MCF 10A (cell line): ENCODE measurements at regions of chr1 and their contacts with region 1.

Region 1: GRCh38 chr1:179293340-179294327 is at the start of gene SOAT1:
- DNase-seq: peak; percentile 90
- H3K4me3 Mint-ChIP-seq: peak within 1 kb of the TSS; percentile 78
- H3K27ac Mint-ChIP-seq: peak within 1 kb of the TSS; percentile 68
- H3K4me1 Mint-ChIP-seq: peaks cover 29% of the 10 kb centered on the region
- H3K27me3 Mint-ChIP-seq: no peaks in the 10 kb centered on the region
- CTCF ChIP-seq: peak; percentile 16
- total RNA-seq, gene SOAT1: 28.4 and 39.7 TPM in 2 replicates

Region 2: DNA sequence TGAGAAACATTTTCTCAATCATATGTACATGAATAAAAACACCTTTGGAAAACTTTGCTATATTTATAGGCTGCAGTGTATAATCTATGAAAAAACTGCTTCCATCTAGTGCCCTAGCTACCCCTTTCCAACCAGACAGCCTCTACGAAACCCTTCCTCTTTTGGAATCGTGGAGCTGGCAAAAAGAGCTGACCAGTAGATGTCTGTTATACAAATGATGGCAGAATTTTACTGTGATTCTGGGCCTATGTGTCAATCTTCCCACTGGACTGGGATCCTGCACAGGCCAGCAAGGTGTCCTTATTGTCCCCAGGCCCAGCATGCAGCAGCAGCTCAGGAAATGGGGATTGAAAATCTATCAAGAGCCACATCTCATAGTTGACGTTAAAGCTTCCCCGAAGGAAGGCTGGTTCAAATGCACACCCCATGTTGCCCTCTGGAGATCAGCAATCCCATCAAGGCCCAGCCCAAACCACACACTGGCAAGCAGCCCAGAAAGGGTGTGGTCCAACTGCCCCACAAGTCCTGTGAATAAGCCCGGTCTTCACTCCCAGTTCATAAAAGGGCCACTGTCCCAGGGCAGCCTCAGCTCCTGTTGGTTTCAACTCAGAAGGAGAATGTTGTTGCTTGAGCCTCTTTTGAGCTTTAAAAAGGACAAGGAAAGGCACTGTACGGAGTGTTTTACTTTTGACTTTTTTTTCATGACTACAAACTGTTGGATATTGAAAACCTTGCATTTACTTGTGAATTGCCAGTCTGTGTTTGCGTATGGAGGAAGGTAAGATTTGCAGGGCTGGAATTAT is 276.7 kb before region 1 on chr1:
- CTCF ChIA-PET with region 1: no interaction called
- POLR2A ChIA-PET with region 1: interaction called, 8 read pairs
- intact Hi-C with region 1: loop called (anchors 5 kb)
- DNase-seq: peak; percentile 99
- H3K4me3 Mint-ChIP-seq: peak overlapping the region; percentile 26
- H3K27ac Mint-ChIP-seq: peak overlapping the region; percentile 54
- H3K4me1 Mint-ChIP-seq: peaks cover 29% of the 10 kb centered on the region
- H3K27me3 Mint-ChIP-seq: no peaks in the 10 kb centered on the region
- CTCF ChIP-seq: no peak

Region 3: DNA sequence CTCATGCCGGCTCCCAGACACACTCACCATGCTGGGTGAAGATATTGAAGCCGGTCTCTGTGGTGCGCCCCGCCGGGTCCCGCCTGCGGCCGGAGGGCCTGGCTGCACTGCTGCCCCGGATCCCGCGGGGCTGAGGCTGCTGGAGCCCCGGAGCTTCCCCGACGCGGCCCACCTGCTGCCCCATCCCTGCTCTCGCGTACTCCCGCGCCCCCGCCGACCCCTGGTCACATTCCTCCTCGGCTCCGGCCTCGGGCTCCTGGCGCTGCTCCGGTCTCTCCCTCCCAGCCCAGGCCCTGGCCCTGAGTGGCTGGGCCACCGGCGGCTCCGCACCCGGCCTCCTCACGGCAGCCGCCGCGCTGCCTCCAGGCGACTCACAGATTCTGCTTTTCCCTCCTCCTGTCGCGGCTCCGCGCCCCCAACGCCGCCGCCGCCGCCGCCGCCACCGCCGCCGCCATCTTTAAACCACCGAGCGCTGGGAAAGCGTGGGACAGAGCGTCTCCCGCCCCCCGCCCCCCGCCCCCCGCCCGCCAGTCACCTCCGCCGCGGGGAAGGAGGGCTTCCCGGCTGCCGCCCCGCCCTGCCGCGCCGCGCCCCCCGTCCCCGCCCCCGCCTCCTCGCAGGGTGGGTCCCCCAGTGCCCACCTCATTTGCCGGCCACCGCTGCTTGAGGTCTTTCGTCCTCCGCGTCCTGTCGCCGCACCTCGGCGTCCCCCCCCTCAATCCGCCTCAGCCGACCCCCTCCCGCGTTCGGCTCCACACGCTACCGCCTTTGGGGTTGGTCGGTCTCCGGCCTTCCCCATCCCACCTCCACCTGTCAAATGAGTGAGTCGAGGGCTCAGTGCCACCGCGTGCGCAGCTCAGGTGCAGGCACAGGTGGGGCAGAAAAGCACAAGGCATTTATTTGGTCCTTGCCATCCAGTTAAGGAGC is 64.2 kb before region 1 on chr1 and contains the start of gene ABL2:
- CTCF ChIA-PET with region 1: no interaction called
- POLR2A ChIA-PET with region 1: interaction called, 11 read pairs
- intact Hi-C with region 1: no loop called
- DNase-seq: peak; percentile 49
- H3K4me3 Mint-ChIP-seq: peak within 1 kb of the TSS; percentile 80
- H3K27ac Mint-ChIP-seq: peak within 1 kb of the TSS; percentile 52
- H3K4me1 Mint-ChIP-seq: peaks cover 37% of the 10 kb centered on the region
- H3K27me3 Mint-ChIP-seq: no peaks in the 10 kb centered on the region
- CTCF ChIP-seq: no peak
- total RNA-seq, gene ABL2: 109 and 160 TPM in 2 replicates

Region 4: DNA sequence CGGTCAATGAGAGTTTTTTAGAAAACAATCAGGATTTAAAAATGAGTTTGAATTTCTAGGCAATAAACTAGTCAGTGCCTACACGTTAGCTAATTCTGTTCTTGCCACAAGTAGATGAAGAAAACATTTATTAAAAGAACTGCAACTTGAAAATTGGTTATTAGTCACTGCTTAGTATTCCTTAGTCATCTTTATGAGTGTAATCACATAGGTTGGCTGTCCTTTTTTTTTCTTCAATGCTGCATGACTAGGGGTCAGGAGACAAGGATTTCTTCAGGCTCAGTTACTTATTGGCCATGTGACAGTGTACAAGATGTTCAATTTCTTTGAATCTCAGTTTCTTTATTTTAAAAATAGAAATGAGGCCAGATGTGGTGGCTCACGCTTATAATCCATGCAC is 17.1 kb after region 1 on chr1:
- CTCF ChIA-PET with region 1: interaction called, 9 read pairs
- POLR2A ChIA-PET with region 1: interaction called, 45 read pairs
- intact Hi-C with region 1: loop called (anchors 1 kb)
- DNase-seq: peak; percentile 77
- H3K4me3 Mint-ChIP-seq: peak overlapping the region; percentile 63
- H3K27ac Mint-ChIP-seq: peak overlapping the region; percentile 89
- H3K4me1 Mint-ChIP-seq: peaks cover 18% of the 10 kb centered on the region
- H3K27me3 Mint-ChIP-seq: no peaks in the 10 kb centered on the region
- CTCF ChIP-seq: no peak